GM12878 (cell line): ENCODE measurements at regions of chr9 and their contacts with region 1.

Region 1: DNA sequence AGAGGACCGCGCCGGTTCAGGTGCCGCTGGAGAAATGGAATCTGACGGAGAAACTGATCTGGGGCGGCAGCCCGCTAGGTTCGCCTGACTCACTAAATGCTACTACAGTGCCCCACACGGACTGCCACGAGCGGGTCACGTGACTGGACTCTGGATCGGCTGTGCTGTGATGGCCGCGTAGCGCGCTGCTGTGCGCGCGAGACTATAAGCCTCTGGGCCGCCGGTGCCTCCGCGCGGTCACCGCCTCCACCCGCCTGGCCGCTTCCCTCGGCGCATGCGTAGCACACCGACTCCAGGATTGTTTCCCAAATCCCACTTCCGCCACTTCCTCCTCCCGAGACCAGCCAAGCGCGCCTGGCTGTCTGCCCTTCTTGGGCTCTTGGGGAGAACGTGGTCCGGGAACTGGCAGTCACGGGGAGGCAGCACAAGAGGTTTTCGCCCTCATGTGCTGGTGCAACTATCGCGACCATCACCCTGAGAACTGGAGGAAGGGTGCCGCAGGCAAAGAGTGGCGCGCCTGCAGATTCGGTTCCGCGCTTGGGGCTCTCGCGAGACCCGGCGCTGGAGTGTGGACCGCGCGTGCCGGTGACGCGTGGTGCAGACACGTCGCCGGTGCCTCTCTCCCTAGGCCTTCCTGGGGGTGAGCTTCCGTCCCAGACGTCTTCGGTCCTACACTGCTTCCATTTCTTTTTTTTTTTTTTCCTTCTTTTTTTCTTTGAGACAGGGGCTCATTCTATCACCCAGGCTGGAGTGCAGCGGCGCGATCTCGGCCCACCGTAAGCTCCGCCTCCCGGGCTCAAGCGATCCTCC is 35.8 kb upstream of the GLDC start:
- DNase-seq: peak; percentile 88
- ATAC-seq: peak; percentile 84
- H3K4me3 ChIP-seq: peak overlapping the region; percentile 88
- H3K27ac ChIP-seq: peak overlapping the region; percentile 99
- H3K4me1 ChIP-seq: peaks cover 20% of the 10 kb centered on the region
- H3K27me3 ChIP-seq: no peaks in the 10 kb centered on the region
- CTCF ChIP-seq: no peak
- EP300 ChIP-seq: peak in 1 of 2 experiments; percentile 20; a peak in 1 of 4 replicates
- POLR2A ChIP-seq: peak; percentile 91
- RAD21 ChIP-seq: no peak

Region 2: DNA sequence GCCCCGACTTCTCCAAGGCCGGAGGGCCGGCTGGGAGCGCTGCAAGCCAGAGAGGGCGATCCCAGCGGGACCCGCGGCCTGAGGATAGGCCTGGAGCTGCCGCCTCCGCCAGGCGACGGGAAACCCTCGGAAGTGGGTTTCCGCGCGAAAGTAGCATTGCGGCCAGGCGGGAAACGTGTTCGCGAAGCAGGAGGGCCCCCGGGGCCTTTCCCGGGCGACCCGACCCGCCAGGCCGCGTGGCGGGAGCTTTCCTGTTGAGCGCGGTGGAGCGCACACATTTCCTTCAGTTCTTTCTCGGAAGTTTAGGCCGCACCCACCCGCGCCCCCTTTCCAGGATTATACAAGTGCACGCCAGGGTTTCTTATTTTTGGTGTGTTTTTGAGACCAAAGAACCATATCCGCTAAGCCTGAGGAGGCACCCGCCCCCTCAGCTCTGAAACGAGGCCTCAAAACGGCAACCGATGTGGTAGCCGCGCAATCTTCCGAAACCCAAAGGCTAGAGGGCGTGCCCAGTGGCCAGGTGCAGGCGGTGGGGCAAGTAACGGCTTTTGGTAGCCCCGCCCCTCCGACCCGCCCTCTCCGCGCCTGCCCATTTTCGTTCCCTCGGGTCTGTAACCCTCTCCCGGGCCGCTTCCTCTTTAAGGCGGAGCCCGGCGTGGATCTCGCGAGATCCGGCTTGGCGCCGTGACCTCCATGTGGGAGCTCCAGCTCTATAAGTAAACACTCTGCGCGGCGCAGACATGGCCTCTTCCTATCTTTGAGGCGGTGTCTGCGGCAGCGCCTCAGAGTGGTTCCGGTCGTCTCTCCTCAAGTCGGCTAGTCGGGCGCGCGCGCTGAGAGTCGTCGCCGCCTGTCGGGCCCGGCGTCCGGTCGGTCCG is 268.6 kb before region 1 on chr9 and contains the start of gene UHRF2:
- CTCF ChIA-PET with region 1: interaction called, 4 read pairs
- POLR2A ChIA-PET with region 1: interaction called, 5 read pairs
- RAD21 ChIA-PET with region 1: interaction called, 4 read pairs
- SMC1A ChIA-PET with region 1: interaction called, 6 read pairs
- in situ Hi-C with region 1: loop called (anchors 10 kb)
- intact Hi-C with region 1: loop called (anchors 5 kb)
- DNase-seq: peak; percentile 93
- ATAC-seq: peak; percentile 90
- H3K4me3 ChIP-seq: peak within 1 kb of the TSS; percentile 86
- H3K27ac ChIP-seq: peak within 1 kb of the TSS; percentile 86
- H3K4me1 ChIP-seq: peaks cover 12% of the 10 kb centered on the region; the same call in 1 of the 2 replicates
- H3K27me3 ChIP-seq: no peaks in the 10 kb centered on the region
- CTCF ChIP-seq: no peak
- EP300 ChIP-seq: peak in 1 of 2 experiments; percentile 71; a peak in 3 of 4 replicates
- POLR2A ChIP-seq: peak; percentile 96
- RAD21 ChIP-seq: 0 out of 2 replicates have a peak, but pooled peaks have one; percentile 13
- polyA plus RNA-seq, gene UHRF2: 11.2 to 14.2 TPM

Region 3: DNA sequence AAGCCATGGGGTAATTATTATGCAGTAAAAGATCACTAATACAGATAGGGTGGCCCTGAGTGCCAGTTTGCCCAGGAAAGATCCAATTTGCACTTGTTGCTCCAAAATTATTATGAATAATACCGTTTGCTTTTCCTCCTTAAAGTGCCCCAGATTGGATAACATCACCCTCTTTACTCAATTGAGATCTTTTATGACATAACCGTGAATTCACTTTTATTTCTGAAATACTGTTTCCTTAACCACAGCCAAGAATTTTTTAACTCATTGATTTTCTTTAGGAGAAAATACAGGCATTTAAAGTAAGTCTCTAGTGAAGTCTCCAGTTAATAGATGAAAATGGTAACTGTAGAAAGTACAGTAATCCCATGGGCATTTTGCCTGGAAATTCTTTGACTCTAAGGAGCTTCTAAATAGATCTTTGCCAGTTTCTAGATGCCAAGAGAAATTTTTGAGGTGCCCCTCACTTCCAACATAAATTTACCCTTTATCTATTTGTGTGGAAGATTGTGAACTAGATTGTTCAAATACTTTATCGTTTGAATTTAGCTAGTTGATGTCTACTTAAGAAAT is 169.2 kb before region 1 on chr9:
- CTCF ChIA-PET with region 1: no interaction called
- POLR2A ChIA-PET with region 1: no interaction called
- RAD21 ChIA-PET with region 1: no interaction called
- SMC1A ChIA-PET with region 1: no interaction called
- in situ Hi-C with region 1: no loop called
- intact Hi-C with region 1: no loop called
- DNase-seq: no peak
- ATAC-seq: no peak
- H3K4me3 ChIP-seq: no peak overlapping the region
- H3K27ac ChIP-seq: no peak overlapping the region
- H3K4me1 ChIP-seq: no peaks in the 10 kb centered on the region
- H3K27me3 ChIP-seq: no peaks in the 10 kb centered on the region
- CTCF ChIP-seq: no peak
- EP300 ChIP-seq: no peak
- POLR2A ChIP-seq: no peak
- RAD21 ChIP-seq: no peak

Region 4: GRCh38 chr9:6575324-6576034 is 105.9 kb before region 1 on chr9:
- CTCF ChIA-PET with region 1: interaction called, 26 read pairs
- POLR2A ChIA-PET with region 1: interaction called, 9 read pairs
- RAD21 ChIA-PET with region 1: interaction called, 11 read pairs
- SMC1A ChIA-PET with region 1: interaction called, 28 read pairs
- in situ Hi-C with region 1: no loop called
- intact Hi-C with region 1: no loop called
- DNase-seq: peak; percentile 53
- ATAC-seq: peak; percentile 95
- H3K4me3 ChIP-seq: no peak overlapping the region
- H3K27ac ChIP-seq: peak overlapping the region; percentile 4; the same call in 1 of the 2 replicates
- H3K4me1 ChIP-seq: peaks cover 18% of the 10 kb centered on the region
- H3K27me3 ChIP-seq: no peaks in the 10 kb centered on the region
- CTCF ChIP-seq: no peak
- EP300 ChIP-seq: no peak
- POLR2A ChIP-seq: no peak
- RAD21 ChIP-seq: no peak

Region 5: DNA sequence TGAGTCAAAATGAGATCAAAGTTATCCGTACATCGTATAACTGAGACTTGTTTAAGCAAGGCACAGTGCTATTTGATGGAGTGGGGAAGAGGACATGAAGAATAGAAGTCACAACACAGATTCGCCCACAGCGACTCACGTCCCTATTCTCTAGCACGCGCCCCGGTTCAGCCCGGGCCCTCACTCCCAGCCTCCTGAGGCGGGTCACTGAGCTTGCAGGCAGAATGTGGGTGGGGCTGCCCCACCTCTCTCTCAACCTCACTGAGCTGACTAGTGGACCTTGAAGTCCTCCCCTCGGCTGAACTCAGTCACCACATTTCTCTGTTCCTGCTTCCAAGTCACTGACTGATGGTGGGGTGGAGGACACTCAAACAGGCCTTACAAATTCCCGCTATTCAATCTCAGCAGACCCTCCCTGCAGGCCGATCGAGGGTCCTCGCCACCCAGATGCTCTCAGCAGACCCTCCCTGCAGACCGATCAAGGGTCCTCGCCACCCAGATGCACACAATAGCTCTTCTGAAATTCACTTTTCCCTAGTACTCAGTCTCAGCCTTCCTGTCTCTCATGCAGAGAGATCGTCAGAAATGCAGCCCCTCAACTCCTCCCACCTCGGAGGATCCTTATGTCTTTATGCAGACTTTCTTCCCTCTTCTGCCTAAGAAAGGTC is 48.7 kb before region 1 on chr9:
- CTCF ChIA-PET with region 1: interaction called, 3 read pairs
- POLR2A ChIA-PET with region 1: interaction called, 4 read pairs
- RAD21 ChIA-PET with region 1: interaction called, 11 read pairs
- SMC1A ChIA-PET with region 1: interaction called, 4 read pairs
- in situ Hi-C with region 1: no loop called
- intact Hi-C with region 1: loop called (anchors 1 kb)
- DNase-seq: peak; percentile 87
- ATAC-seq: peak; percentile 96
- H3K4me3 ChIP-seq: peak overlapping the region; percentile 38; the same call in 1 of the 2 replicates
- H3K27ac ChIP-seq: peak overlapping the region; percentile 59
- H3K4me1 ChIP-seq: peaks cover 32% of the 10 kb centered on the region
- H3K27me3 ChIP-seq: no peaks in the 10 kb centered on the region
- CTCF ChIP-seq: no peak
- EP300 ChIP-seq: peak in 1 of 2 experiments; percentile 66; a peak in 2 of 4 replicates
- POLR2A ChIP-seq: peak; percentile 50
- RAD21 ChIP-seq: no peak

Region 6: DNA sequence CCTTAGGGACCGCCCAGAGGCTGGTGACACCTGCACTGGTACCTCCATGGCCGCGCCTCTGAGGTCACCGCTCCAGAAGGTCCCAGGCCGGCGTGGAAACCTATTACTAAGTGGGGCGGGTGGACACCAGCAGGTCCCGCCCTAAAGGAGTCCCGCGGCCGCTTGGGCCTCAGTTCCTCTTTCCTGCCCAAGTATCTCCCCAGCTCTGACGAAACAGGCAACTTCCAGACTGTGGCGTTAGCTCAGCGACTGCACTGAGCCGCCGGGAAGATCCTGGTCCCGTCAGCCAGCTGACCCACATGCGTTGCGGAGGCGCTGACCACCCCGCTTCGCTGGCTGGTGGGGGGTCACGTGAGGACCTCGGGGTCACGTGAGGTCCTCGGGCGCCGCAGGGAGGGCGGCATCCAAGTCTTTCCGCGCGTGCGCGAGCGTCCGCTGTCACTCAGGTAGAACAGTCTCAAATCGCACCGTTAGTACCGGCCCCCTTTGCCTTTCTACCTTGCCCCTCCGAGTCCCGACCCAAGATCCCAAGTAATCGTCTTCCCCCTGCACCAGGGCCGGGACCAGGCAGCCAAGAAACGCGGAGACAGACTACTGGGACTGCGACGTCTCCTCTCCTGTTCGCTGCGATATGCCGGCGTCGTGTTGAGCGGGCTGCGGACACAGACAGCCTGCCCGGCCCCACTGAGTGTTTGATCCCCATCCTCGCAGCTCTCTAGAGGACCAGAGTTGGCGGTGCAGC is 22.7 kb after region 1 on chr9:
- CTCF ChIA-PET with region 1: interaction called, 8 read pairs
- POLR2A ChIA-PET with region 1: interaction called, 10 read pairs
- RAD21 ChIA-PET with region 1: interaction called, 5 read pairs
- SMC1A ChIA-PET with region 1: interaction called, 7 read pairs
- in situ Hi-C with region 1: no loop called
- intact Hi-C with region 1: no loop called
- DNase-seq: no peak
- ATAC-seq: peak; percentile 93
- H3K4me3 ChIP-seq: peak overlapping the region; percentile 78
- H3K27ac ChIP-seq: peak overlapping the region; percentile 86
- H3K4me1 ChIP-seq: peaks cover 11% of the 10 kb centered on the region
- H3K27me3 ChIP-seq: no peaks in the 10 kb centered on the region
- CTCF ChIP-seq: no peak
- EP300 ChIP-seq: no peak
- POLR2A ChIP-seq: peak; percentile 96
- RAD21 ChIP-seq: no peak

Region 7: GRCh38 chr9:6723881-6724420 is 42.6 kb after region 1 on chr9:
- CTCF ChIA-PET with region 1: no interaction called
- POLR2A ChIA-PET with region 1: interaction called, 14 read pairs
- RAD21 ChIA-PET with region 1: interaction called, 5 read pairs
- SMC1A ChIA-PET with region 1: interaction called, 44 read pairs
- in situ Hi-C with region 1: no loop called
- intact Hi-C with region 1: no loop called
- DNase-seq: no peak
- ATAC-seq: peak; percentile 10; the same call in 2 of the 3 replicates
- H3K4me3 ChIP-seq: no peak overlapping the region
- H3K27ac ChIP-seq: peak overlapping the region; percentile 81
- H3K4me1 ChIP-seq: peaks cover 21% of the 10 kb centered on the region
- H3K27me3 ChIP-seq: no peaks in the 10 kb centered on the region
- CTCF ChIP-seq: no peak
- EP300 ChIP-seq: no peak
- POLR2A ChIP-seq: no peak
- RAD21 ChIP-seq: no peak

Region 8: GRCh38 chr9:6907772-6908381 is 226.5 kb after region 1 on chr9:
- CTCF ChIA-PET with region 1: no interaction called
- POLR2A ChIA-PET with region 1: no interaction called
- RAD21 ChIA-PET with region 1: no interaction called
- SMC1A ChIA-PET with region 1: no interaction called
- in situ Hi-C with region 1: no loop called
- intact Hi-C with region 1: no loop called
- DNase-seq: no peak
- ATAC-seq: 0 out of 3 replicates have a peak, but pooled peaks have one; percentile 17
- H3K4me3 ChIP-seq: no peak overlapping the region
- H3K27ac ChIP-seq: no peak overlapping the region
- H3K4me1 ChIP-seq: no peaks in the 10 kb centered on the region
- H3K27me3 ChIP-seq: no peaks in the 10 kb centered on the region
- CTCF ChIP-seq: peak; percentile 35 to 47 (median 42); a peak in 4 of 6 replicates
- EP300 ChIP-seq: no peak
- POLR2A ChIP-seq: no peak
- RAD21 ChIP-seq: peak; percentile 66